Posterior vena cava (tissue), 2 donors: ENCODE measurements at regions of chr2 and their contacts with region 1.

Region 1: DNA sequence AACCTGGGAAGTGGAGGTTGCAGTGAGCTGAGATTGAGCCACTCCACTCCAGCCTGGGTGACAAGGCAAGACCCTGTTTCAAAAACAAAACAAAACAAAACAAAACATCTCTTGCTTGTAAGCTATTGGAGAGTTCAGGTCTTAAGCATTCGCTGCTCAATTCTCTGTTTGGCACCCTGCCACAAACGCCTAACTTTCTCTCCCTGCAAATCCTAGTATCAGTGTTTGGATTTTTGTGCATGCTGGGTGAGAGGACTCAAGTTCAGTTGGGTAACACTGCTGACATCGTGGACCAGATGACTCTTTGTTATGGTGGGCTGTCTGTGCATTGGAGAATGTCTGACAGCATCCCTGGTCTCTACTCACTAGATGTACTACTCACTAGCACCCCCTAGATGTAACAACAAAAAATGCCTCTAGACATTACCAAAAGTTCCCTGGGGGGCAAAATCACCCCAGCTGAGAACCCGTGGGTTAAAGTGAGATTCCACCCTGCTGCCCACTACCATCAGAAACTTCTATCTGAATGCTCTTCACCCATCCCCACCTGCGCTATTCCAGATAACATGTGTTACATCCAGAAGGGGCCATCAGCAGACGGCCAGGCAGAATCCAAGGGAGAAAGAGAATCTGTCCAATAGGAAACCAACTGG is 50.9 kb downstream of the CACNB4 start:
- DNase-seq: no peak

Region 2: GRCh38 chr2:151953467-151953866 is 94.5 kb before region 1 on chr2:
- intact Hi-C with region 1: no loop called
- DNase-seq: no peak

Region 3: GRCh38 chr2:152126664-152127063 is 78.7 kb after region 1 on chr2:
- intact Hi-C with region 1: loop called in 1 of 2 experiments (anchors 10 kb)
- DNase-seq: no peak

Region 4: GRCh38 chr2:152155209-152155608 is 107.3 kb after region 1 on chr2:
- intact Hi-C with region 1: loop called in 1 of 2 experiments (anchors 10 kb)
- DNase-seq: no peak